Calu3 (cell line): ENCODE measurements at regions of chr7 and their contacts with region 1.

Region 1: DNA sequence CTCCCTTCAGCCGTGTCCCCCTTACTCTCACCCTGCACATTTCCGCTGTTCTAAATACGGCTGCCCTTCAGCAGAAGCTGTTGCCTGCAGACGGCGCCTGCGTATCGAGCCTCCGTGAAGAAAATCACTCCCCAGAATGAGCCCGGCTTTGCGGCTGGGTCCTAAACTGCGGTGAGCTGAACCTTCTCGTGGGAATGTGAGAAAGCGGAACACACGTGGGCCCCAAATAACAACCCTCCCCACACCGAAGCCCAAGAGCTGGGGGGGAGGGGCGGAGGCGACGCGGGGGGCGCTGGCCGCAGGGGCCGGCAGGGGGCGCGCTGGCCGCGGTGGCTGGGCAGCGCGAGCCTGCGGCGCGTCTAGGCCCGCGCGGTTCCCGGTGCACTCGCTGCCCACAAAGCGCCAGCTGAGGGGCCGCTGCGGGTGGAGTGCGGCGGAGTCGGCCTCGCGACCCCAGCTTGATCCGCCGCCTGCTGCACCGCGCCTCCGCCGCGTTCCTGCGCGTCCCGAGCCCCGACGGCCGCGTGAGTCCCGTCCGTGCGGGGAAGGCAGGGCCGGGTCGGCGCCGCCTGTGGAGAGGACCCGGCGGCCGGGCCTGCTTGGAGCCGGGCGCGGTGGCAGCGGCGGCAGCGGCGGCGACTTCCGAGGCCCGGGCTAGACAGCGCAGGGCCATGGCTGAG is at the start of gene ZNF398:
- DNase-seq: peak; percentile 83
- H3K4me3 Mint-ChIP-seq: peak within 1 kb of the TSS; percentile 69
- H3K27ac Mint-ChIP-seq: peak within 1 kb of the TSS; percentile 90
- H3K4me1 Mint-ChIP-seq: peaks cover 30% of the 10 kb centered on the region
- H3K27me3 Mint-ChIP-seq: no peaks in the 10 kb centered on the region
- CTCF ChIP-seq: peak; percentile 76
- total RNA-seq, gene ZNF398: 14.6 and 17.0 TPM in 2 replicates

Region 2: GRCh38 chr7:147298611-147299043 is 1848.6 kb before region 1 on chr7:
- CTCF ChIA-PET with region 1: no interaction called
- intact Hi-C with region 1: no loop called
- DNase-seq: no peak
- H3K4me3 Mint-ChIP-seq: no peak overlapping the region
- H3K27ac Mint-ChIP-seq: no peak overlapping the region
- H3K4me1 Mint-ChIP-seq: no peaks in the 10 kb centered on the region
- H3K27me3 Mint-ChIP-seq: no peaks in the 10 kb centered on the region
- CTCF ChIP-seq: no peak

Region 3: GRCh38 chr7:149028346-149029109 is 118.7 kb before region 1 on chr7 and contains the start of gene PDIA4:
- CTCF ChIA-PET with region 1: no interaction called
- intact Hi-C with region 1: loop called (anchors 5 kb)
- DNase-seq: peak; percentile 100
- H3K4me3 Mint-ChIP-seq: peak within 1 kb of the TSS; percentile 94
- H3K27ac Mint-ChIP-seq: peak within 1 kb of the TSS; percentile 98
- H3K4me1 Mint-ChIP-seq: peaks cover 17% of the 10 kb centered on the region
- H3K27me3 Mint-ChIP-seq: no peaks in the 10 kb centered on the region
- CTCF ChIP-seq: peak; percentile 26
- total RNA-seq, gene PDIA4: 332 and 351 TPM in 2 replicates

Region 4: DNA sequence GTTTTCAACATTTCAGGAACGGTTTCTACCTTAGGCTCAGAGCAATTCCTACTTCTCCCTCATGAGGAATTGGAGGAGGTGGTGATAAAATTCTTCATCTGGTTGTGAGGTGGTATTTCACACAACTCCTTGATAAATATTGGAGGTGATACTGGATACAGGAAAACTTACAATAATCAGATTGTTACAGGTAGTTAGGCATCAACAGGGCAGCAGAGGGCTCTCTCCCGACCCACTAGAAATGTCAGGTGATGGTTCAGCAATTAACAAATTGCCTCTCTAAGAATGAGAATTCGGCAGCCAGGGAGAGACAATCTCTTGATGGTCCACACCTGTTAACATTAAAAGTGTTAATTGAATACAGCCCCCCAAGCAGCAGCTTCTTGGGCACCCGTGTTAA is 79.3 kb before region 1 on chr7:
- CTCF ChIA-PET with region 1: interaction called, 9 read pairs
- intact Hi-C with region 1: loop called (anchors 5 kb)
- DNase-seq: peak; percentile 17
- H3K4me3 Mint-ChIP-seq: no peak overlapping the region
- H3K27ac Mint-ChIP-seq: no peak overlapping the region
- H3K4me1 Mint-ChIP-seq: no peaks in the 10 kb centered on the region
- H3K27me3 Mint-ChIP-seq: no peaks in the 10 kb centered on the region
- CTCF ChIP-seq: no peak

Region 5: GRCh38 chr7:149125863-149126661 is 21.1 kb before region 1 on chr7 and contains the start of gene ZNF425:
- CTCF ChIA-PET with region 1: interaction called, 13 read pairs
- intact Hi-C with region 1: loop called (anchors 2 kb)
- DNase-seq: peak; percentile 96
- H3K4me3 Mint-ChIP-seq: peak within 1 kb of the TSS; percentile 82
- H3K27ac Mint-ChIP-seq: peak within 1 kb of the TSS; percentile 77
- H3K4me1 Mint-ChIP-seq: peaks cover 18% of the 10 kb centered on the region
- H3K27me3 Mint-ChIP-seq: no peaks in the 10 kb centered on the region
- CTCF ChIP-seq: peak; percentile 91
- total RNA-seq, gene ZNF425: 1.0 and 1.5 TPM in 2 replicates

Region 6: DNA sequence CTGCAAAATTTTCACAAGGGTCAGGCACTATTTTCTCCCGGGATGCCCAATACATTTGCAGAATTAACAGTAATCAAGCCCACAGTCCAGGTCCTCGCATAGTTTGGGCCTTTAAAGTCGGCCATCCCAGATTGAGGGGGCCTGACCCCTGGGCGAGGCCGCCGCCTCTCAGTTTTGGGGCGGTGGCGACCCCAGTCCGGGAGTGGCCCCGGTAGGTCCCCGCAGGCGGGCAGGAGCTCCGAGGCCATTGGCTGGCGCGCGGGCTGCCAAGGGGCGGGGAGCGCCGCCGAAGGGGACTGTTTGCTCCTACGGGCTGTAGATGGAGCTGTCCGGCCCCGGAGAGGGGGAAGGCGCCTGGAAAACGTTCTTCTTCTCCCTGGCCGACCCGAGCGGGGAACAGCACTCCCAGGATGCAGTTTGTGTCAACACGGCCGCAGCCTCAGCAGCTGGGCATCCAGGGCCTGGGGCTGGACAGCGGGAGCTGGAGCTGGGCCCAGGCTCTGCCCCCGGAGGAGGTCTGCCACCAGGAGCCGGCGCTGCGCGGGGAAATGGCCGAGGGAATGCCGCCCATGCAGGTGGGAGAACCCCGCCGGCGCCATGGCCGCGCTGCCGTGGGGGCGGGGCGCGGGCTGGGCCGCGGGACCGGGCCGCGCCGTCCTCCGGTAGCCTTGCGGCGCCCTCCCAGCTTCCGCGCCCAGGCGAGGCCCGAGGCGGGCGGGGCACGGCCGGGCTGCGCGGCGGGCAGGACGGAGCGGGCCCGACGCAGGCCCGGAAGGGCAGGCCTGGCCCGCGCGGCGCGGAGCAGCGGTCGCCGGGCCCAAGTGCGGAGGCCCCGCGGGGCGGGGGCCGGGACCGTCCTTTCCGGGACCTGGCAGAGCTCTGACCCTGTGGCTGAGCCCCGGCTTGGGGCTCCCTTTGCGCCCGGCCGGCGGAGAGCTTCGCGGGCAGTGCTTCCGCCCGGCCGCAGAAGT is 48.3 kb after region 1 on chr7 and contains the start of gene ZNF282:
- CTCF ChIA-PET with region 1: no interaction called
- intact Hi-C with region 1: loop called (anchors 5 kb)
- DNase-seq: peak; percentile 94
- H3K4me3 Mint-ChIP-seq: peak within 1 kb of the TSS; percentile 87
- H3K27ac Mint-ChIP-seq: peak within 1 kb of the TSS; percentile 67
- H3K4me1 Mint-ChIP-seq: peaks cover 15% of the 10 kb centered on the region
- H3K27me3 Mint-ChIP-seq: no peaks in the 10 kb centered on the region
- CTCF ChIP-seq: peak; percentile 39
- total RNA-seq, gene ZNF282: 40.3 and 45.2 TPM in 2 replicates

Region 7: GRCh38 chr7:149239345-149240191 is 92.4 kb after region 1 on chr7 and contains the start of gene ZNF212:
- CTCF ChIA-PET with region 1: interaction called, 3 read pairs
- intact Hi-C with region 1: loop called (anchors 2 kb)
- DNase-seq: peak; percentile 97
- H3K4me3 Mint-ChIP-seq: peak within 1 kb of the TSS; percentile 90
- H3K27ac Mint-ChIP-seq: peak within 1 kb of the TSS; percentile 97
- H3K4me1 Mint-ChIP-seq: peaks cover 28% of the 10 kb centered on the region
- H3K27me3 Mint-ChIP-seq: no peaks in the 10 kb centered on the region
- CTCF ChIP-seq: peak; percentile 68
- total RNA-seq, gene ZNF212: 17.2 and 18.5 TPM in 2 replicates

Region 8: DNA sequence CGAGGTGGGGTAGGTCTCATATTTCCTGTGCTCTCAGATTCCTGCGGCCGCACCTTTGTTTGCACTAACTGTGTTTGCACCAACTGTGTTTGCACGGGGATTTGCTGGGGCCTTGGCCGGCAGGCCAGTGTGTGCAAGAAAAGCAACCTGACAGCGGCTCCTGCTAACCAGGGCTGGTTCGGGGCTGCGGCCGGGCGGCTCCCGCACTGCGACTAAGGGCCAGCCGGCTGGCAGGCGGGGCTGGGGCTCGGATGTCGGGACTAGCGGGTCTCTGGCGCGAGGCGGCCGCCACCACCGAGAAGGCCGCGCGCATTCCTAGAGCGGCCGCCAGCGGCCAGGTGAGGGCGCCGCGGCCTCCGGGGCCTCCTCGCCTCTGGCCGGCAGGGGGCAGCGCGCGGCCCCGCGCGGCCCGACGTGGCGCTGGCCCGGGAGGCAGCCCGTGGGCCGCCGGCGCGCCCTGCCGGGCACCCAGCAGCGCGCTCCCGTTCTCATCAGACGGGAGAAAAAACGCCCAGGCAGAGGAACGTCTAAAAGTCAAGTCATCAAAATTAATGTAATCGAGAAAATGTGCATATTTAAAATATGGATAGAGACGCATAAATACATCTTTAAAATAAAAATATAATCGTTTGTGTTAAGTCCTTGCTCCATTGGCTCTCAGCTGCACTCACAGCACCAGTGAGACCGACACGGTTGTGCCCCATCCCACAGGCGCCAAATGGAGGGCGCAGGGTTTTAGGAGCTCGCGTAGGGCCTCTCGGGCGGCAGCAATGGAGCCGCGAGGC is 275.1 kb after region 1 on chr7:
- CTCF ChIA-PET with region 1: no interaction called
- intact Hi-C with region 1: loop called (anchors 2 kb)
- DNase-seq: peak; percentile 86
- H3K4me3 Mint-ChIP-seq: peak overlapping the region; percentile 82
- H3K27ac Mint-ChIP-seq: no peak overlapping the region
- H3K4me1 Mint-ChIP-seq: no peaks in the 10 kb centered on the region
- H3K27me3 Mint-ChIP-seq: no peaks in the 10 kb centered on the region
- CTCF ChIP-seq: peak; percentile 53